ENCODE measurements at regions of chr18 and their contacts with region 1.

Region 1: GRCh38 chr18:35949903-35950627 is 22.4 kb upstream of the RMP24 start:
- DNase-seq: peak; percentile 74
- ATAC-seq: peak; percentile 78

Region 2: DNA sequence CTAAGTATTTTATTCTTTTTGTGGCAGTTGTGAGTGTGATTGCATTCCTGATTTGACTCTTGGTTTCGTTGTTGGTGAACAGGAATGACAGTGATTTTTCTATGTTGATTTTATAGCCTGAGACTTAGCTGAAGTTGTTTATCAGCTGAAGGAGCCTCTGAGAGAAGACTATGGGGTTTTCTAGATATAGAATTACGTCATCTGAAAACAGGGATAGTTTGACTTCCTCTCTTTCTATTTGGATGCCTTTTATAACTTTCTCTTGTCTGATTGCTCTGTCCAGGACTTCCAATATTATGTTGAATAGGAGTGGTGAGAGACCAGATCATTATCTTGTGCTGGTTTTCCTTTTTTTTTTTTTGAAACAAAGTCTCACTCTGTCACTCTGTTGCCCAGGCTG is 1707.3 kb before region 1 on chr18:
- intact Hi-C with region 1: no loop called
- DNase-seq: no peak
- ATAC-seq: no peak

Region 3: DNA sequence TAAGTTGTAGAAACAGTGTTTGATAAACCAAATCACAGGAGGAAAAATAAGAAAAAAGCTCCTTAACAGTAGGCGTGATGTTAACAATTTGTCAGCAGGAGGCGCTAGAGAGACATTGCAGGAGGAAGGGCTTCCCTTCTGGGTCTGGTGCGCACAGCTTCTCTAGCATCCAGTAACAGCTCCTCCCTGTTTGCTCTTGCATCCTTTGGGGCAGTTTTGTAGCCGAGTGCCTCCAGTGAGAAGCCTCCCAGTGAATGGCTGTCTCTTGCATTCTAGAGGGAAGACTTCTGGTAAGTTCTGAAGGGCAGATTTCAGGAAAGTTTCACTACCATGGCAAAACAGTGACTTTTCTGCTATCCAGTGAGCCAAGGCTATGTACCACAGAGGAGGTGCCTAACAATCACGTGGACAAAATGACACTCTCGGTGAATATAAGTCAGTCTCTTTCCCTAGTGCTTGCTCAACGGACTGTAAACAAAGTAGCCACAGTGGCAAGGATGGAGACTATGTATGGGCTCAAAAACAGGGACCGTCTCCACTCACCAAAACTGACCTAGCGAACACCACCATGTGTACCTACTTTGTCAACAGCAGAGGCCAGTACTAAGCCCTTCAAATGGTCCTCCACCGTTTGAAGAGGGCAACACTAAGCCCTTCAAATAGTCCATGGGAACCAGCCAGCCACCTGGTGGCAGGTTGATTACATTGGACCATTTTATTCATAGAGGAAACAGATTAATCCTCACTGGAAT is 563.3 kb before region 1 on chr18:
- intact Hi-C with region 1: loop called (anchors 10 kb)
- DNase-seq: no peak
- ATAC-seq: peak; percentile 74

Region 4: GRCh38 chr18:35756506-35757117 is 193.5 kb before region 1 on chr18:
- intact Hi-C with region 1: loop called (anchors 1 kb)
- DNase-seq: no peak
- ATAC-seq: peak; percentile 64

Region 5: GRCh38 chr18:35993013-35993412 is 42.9 kb after region 1 on chr18:
- intact Hi-C with region 1: no loop called
- DNase-seq: no peak
- ATAC-seq: peak; percentile 50

Region 6: DNA sequence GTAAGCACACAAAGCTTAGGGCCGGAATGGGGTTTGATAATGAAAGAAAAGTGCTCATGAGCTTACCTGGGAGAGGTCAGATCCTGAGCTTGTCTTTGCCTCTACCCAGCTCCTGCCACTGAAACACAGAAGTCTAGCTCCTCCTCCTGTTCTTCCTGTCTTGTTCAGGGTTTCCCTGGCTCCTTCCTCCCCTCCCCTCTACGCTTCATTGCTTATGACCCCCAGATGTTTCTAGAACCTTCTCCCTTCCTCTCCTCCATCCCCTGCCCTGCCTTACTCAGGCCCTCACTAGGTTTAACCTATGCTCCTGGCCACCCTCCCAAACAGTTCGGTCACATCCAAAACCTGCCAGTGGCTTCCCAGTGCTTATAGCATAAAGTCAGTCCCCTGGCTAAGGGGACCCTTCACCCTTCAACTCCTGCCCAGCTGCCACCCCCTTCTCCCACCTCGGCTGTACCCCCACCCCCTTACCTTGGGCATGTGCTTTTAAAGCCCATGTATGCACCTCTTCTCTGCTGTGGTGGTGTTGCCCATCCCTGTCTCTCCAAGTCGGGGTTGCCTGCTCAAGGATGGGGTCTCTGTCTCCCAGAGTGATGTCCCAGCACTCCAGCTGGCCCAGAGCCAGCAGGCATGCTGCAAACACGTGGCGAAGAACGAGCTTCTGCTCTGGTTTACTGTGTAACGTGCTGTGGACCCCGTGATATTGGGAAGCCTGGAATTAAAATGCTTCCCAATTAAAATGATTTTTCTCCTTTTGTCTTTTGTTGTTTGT is 645.2 kb after region 1 on chr18:
- intact Hi-C with region 1: no loop called
- DNase-seq: no peak
- ATAC-seq: no peak

Measured in Right ventricle myocardium inferior (tissue), 1 donor.